GM13976 (cell line): ENCODE measurements at regions of chrX and their contacts with region 1.

Region 1: DNA sequence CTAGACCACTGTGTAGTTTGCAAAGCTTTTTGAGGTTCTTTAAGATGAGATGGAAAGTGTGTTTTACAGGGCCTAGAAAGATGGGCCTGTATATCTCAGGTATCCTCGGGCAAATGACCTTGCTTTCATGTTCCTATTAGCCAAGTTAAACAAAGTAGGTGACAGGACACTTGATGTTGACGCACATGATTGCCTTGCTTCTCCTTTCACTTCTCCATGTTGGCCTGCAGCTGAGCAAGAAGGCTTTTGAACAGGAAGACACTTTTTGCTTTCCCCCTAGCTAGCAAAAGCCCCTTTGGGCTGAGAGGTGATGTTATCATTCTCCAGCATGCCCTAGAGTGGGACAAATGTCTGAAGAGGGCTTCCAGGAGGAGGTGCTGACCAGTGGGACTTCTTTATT is 202.1 kb downstream of the GPC3 start:
- DNase-seq: peak; percentile 14
- CTCF ChIP-seq: no peak

Region 2: GRCh38 chrX:133461231-133461630 is 322.0 kb before region 1 on chrX:
- in situ Hi-C with region 1: no loop called
- DNase-seq: no peak
- CTCF ChIP-seq: no peak

Region 3: DNA sequence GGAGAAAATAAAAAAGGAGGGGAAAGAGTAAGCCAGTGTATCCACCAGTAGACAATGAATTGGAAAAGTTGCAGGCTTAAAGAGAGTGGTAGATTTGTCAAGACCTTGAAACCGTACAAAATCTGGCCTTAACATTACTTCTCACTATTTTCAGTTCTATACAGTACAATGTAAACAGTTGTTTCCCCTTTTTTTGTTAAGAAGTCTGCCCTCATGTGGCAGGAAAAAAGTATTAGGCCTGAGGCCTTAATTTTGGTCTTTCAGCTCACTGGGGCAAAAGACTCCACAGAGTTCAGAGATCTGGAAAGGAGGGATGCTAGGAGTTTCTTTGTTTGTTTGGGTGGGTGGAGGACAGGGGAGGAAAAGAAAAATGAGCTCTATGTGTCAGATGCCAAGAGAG is 361.0 kb after region 1 on chrX:
- in situ Hi-C with region 1: loop called (anchors 10 kb)
- DNase-seq: peak; percentile 29
- CTCF ChIP-seq: peak; percentile 41